BJ (cell line): ENCODE measurements at regions of chr5 and their contacts with region 1.

Region 1: GRCh38 chr5:161544350-161544765 is 2.2 kb downstream of the GABRB2 start:
- DNase-seq: no peak
- H3K4me3 ChIP-seq: no peak overlapping the region
- H3K27me3 ChIP-seq: peaks cover 5% of the 10 kb centered on the region; the same call in 1 of the 2 replicates
- CTCF ChIP-seq: peak; percentile 77

Region 2: DNA sequence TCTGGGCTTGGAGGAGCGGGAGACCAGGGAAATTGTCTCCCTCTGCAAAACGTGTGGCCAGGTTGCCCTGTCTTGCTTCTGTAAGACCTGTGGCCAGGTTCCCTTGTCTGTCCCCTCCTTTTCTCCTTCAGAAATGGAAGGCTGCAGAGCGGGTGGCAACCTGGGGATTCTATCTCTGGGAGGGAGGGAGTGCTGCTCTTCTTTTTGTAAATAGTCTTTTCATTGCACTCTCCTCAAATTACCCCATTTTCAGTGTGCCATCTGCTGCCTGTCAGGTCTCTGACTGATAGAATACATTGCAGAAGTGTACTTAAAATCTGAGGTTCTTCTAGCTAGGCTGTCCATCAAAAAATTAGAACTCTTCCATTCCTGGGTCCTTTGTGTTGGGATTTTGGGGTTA is 123.8 kb before region 1 on chr5:
- CTCF ChIA-PET with region 1: no interaction called
- POLR2A ChIA-PET with region 1: no interaction called
- DNase-seq: no peak
- H3K4me3 ChIP-seq: no peak overlapping the region
- H3K27me3 ChIP-seq: no peaks in the 10 kb centered on the region
- CTCF ChIP-seq: no peak

Region 3: GRCh38 chr5:161513942-161514341 is 30.4 kb before region 1 on chr5:
- CTCF ChIA-PET with region 1: no interaction called
- POLR2A ChIA-PET with region 1: no interaction called
- DNase-seq: no peak
- H3K4me3 ChIP-seq: no peak overlapping the region
- H3K27me3 ChIP-seq: no peaks in the 10 kb centered on the region
- CTCF ChIP-seq: no peak

Region 4: GRCh38 chr5:161734741-161735140 is 190.4 kb after region 1 on chr5:
- CTCF ChIA-PET with region 1: no interaction called
- POLR2A ChIA-PET with region 1: no interaction called
- DNase-seq: no peak
- H3K4me3 ChIP-seq: no peak overlapping the region
- H3K27me3 ChIP-seq: no peaks in the 10 kb centered on the region
- CTCF ChIP-seq: no peak

Region 5: DNA sequence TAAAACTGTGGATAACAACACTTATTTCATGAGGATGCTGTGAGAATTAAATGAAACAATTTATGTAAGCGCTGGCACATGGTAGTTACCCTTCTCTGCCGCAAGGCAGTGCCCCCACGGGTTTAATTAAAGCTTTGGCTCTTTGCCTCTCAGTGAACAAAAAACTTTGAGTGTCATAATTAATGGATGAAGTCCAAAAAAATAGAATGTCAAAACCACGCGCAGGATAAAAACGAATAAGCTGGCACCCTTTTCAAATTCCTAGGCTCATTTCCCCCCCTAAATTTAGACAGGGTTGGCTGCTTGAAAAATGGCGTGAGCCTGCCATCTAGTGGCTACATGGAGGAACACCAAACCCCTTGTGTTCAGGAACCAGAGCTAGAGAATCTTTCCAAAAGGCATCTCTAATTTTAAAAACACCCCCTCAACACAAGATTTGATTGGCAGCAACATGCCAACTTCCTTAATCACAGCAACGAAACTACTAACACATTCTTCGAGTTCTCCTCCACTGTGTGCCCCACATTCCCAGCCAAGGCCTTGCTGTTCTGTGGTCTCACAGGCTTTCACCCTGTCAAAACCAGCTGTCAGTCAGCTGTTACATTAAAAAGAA is 1864.1 kb after region 1 on chr5:
- CTCF ChIA-PET with region 1: interaction called, 13 read pairs
- POLR2A ChIA-PET with region 1: no interaction called
- DNase-seq: peak; percentile 7
- H3K4me3 ChIP-seq: no peak overlapping the region
- H3K27me3 ChIP-seq: peaks cover 1% of the 10 kb centered on the region; the same call in 1 of the 2 replicates
- CTCF ChIP-seq: peak; percentile 88